ENCODE measurements at regions of chr18 and their contacts with region 1.

Region 1: GRCh38 chr18:8696749-8697211 is 8.6 kb upstream of the MTCL1 start:
- DNase-seq: peak; percentile 58 to 92 (median 81)
- H3K4me3 ChIP-seq: no peak overlapping the region
- H3K27ac ChIP-seq: no peak overlapping the region
- H3K4me1 ChIP-seq: no peaks in the 10 kb centered on the region
- H3K27me3 ChIP-seq: no peaks in the 10 kb centered on the region
- CTCF ChIP-seq: peak; percentile 75 to 97 (median 88)
- POLR2A ChIP-seq: no peak

Region 2: DNA sequence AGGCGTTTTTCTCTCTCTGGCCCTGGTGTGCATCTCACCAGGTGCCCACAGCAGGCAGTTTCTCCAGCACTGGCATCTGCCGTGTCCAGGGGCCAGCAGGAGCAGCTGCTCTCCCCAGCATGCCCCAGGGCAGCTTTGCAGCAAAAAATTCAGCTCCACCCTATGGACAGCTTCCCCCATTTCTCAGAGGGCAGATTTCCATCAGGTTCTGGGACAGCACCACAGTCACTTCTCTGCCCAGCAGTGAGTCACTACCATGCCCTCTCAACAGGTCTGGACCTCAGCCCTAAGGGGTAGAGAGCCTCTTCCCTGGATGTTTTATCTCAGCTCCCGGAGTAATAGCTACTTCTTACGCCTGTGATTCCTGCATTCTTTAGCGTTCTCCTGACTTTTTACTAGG is 257.7 kb before region 1 on chr18:
- intact Hi-C with region 1: no loop called
- DNase-seq: no peak
- H3K4me3 ChIP-seq: no peak overlapping the region
- H3K27ac ChIP-seq: no peak overlapping the region
- H3K4me1 ChIP-seq: no peaks in the 10 kb centered on the region
- H3K27me3 ChIP-seq: no peaks in the 10 kb centered on the region
- CTCF ChIP-seq: no peak
- POLR2A ChIP-seq: no peak

Region 3: GRCh38 chr18:8988261-8988871 is 291.6 kb after region 1 on chr18:
- intact Hi-C with region 1: loop called (anchors 5 kb)
- DNase-seq: peak; percentile 41 to 79 (median 60)
- H3K4me3 ChIP-seq: no peak overlapping the region
- H3K27ac ChIP-seq: no peak overlapping the region
- H3K4me1 ChIP-seq: no peaks in the 10 kb centered on the region
- H3K27me3 ChIP-seq: no peaks in the 10 kb centered on the region
- CTCF ChIP-seq: peak; percentile 45 to 81 (median 73)
- POLR2A ChIP-seq: no peak